ENCODE measurements at regions of chr3 and their contacts with region 1.

Region 1: DNA sequence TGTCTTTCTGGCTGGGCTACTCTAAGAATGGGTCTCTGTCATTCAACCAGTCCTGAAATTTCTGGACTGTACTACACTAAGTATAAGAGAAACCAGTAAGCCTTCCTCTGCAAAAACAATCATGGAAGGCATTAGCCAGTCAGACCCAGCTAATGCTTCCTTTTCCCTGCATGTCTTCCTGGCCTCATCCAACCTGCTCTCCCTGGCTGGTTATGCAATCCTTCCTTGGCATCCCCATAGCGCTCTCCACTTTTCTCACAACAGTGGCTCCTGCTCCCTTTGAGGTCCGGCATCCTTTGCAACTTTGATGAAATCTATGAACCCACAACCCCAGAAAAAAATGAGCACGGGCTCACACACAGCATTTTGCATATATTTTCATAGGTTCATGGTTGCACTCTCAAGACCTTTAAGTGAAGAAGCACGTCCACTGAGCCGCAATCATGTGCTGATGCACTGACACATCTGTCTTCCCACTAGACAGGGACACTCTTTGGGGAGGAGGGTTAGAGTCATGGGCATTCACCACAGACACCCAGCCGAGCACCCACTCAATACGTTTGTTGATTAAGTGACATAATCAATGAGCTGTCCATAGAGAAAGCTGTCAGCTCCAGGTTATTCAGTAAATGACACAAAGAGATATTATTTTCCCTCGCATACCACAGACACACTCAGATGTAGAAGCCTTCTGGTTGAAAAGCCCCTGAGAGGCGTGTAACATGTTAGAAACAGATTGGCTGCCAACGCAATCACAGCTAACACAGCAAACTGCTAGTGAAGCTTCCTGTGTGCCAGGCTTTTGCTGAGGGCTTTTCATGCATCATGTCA is 66.7 kb downstream of the PLD1 start:
- DNase-seq: no peak
- ATAC-seq: no peak

Region 2: DNA sequence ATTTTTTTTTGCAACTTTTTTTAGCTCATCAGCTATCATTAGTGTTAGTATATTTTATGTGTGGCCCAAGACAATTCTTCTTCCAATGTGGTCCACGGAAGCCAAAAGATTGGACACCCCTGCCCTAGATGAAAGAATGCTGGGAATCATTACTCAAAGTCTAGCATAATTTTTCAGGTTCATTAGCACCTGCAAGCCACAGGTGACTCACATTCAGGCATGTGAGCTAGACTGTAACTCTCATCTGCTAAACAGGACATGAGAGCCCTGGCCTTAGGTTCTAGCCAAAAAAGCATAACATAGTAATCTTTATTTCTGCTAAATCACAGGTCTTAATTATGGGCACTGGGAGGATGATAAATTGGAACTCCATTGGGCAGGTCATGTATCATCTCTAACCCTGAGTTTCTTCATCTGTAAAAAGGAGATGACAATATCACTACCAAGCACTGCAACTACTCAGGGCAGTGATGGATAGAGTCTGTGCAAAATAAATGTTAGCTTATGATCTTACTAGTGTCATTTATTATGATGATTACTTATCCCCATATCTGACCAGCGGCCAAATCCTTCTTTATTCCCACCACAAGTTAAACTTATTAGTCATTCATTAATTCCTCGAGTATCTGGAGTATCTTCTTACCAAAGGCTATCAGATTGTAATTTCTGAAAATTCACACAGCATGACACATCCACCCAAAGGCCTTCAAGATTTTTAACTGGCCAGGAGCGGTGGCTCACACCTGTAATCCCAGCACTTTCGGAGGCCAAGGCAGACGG is 58.2 kb before region 1 on chr3:
- intact Hi-C with region 1: loop called (anchors 5 kb)
- DNase-seq: no peak
- ATAC-seq: no peak